Left colon (tissue), 2 donors: ENCODE measurements at regions of chr16 and their contacts with region 1.

Region 1: GRCh38 chr16:86563489-86564345 is 2.9 kb upstream of the FOXC2 start:
- DNase-seq: peak; percentile 75 to 90
- ATAC-seq: peak; percentile 95

Region 2: DNA sequence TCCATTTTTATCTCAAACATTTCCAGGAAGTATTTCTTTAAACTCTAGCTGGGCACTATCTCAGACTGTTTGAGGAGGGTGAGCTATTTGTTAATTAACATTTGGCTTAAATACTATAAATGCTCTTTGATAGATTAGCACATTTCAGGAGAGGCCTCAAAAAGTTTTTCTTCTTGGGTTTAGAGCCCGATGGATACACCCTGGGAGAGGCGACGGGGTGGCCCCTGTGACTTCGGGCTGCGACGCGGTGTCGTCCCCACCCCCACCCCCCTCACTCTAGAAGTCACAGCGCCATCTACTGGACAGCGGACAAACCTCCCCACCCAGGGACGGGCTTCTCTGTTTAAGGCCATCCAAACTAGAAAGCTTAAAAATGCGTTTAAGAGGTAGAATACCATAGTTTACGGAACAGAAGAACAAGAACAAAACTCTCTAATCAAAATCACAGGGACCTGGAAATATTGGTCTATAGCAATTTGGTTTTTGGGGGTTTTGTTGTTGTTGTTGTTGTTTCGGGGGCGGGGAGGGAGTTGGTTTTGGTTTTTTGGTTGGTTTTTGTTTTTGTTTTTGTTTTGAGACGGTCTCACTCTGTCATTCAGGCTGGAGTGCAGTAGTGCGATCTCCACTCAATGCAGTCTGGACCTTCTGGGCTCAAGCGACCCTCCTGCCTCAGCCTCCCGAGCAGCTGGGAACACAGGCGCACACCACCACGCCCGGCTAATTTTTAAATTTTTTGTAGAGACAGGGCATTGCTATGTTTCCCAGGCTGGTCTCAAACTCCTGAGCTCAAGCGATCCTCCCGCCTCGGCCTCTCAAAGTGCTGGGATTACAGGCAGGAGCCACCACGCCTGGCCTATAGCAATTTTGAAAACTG is 499.1 kb after region 1 on chr16:
- intact Hi-C with region 1: loop called in 1 of 2 experiments (anchors 5 kb)
- DNase-seq: peak in 1 of 2 donors; percentile 73
- ATAC-seq: peak; percentile 74

Region 3: DNA sequence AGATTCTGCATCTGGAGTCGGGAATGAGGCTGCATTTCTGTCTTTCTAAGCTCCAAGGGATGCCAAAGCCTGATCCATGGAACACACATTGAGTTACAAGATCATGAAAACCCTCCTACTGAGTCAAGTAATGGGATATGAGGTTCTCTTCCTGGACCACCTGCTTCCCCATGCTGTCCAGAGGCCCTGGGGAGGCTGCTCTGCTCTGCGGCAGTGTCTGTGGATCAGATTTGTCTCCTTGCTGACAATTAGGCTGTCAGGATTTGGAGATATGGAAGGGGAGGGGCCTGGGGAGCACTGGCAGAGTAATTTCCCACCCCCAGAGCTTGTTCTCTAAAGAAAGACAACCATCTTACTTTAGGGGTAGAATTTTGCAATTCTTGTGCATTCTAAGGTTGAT is 720.5 kb after region 1 on chr16:
- intact Hi-C with region 1: loop called in 1 of 2 experiments (anchors 5 kb)
- DNase-seq: no peak
- ATAC-seq: no peak